Mammary epithelial cell (primary cell): ENCODE measurements at regions of chr3 and their contacts with region 1.

Region 1: GRCh38 chr3:194486540-194487288 is at the start of gene ATP13A3:
- DNase-seq: peak; percentile 85
- H3K4me3 ChIP-seq: peak within 1 kb of the TSS; percentile 62 to 76 (median 64)
- H3K27ac ChIP-seq: peak within 1 kb of the TSS; percentile 76
- H3K4me1 ChIP-seq: peaks cover 34% of the 10 kb centered on the region
- H3K27me3 ChIP-seq: no peaks in the 10 kb centered on the region
- CTCF ChIP-seq: no peak
- total RNA-seq, gene ATP13A3: 151 to 226 TPM

Region 2: DNA sequence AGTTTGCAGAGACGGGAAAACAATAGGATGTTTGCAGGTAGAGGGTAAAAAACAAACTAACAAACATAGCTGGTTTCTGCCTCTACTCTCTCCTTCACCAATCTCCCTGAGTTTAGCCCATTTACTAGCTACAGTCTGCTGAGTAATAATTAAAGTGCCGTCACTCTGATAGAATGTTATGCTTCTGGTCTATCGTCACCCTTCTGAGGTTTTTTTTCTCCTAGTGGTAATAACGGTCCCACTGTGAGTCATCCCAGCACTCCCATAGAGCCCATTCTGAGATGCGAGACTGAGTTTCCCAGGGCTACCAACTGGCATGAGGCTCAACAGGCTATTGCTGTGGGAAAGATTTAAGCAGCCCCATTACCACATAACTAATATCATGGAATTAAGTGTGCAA is 1189.3 kb before region 1 on chr3:
- CTCF ChIA-PET with region 1: no interaction called
- dilution Hi-C with region 1: no loop called
- in situ Hi-C with region 1: no loop called
- intact Hi-C with region 1: no loop called
- DNase-seq: no peak
- H3K4me3 ChIP-seq: no peak overlapping the region
- H3K27ac ChIP-seq: no peak overlapping the region
- H3K4me1 ChIP-seq: peaks cover 10% of the 10 kb centered on the region
- H3K27me3 ChIP-seq: no peaks in the 10 kb centered on the region
- CTCF ChIP-seq: no peak

Region 3: GRCh38 chr3:194404365-194405140 is 82.2 kb before region 1 on chr3:
- CTCF ChIA-PET with region 1: no interaction called
- dilution Hi-C with region 1: no loop called
- in situ Hi-C with region 1: no loop called
- intact Hi-C with region 1: no loop called
- DNase-seq: peak; percentile 29
- H3K4me3 ChIP-seq: no peak overlapping the region
- H3K27ac ChIP-seq: no peak overlapping the region
- H3K4me1 ChIP-seq: no peaks in the 10 kb centered on the region
- H3K27me3 ChIP-seq: no peaks in the 10 kb centered on the region
- CTCF ChIP-seq: peak; percentile 64 to 69

Region 4: GRCh38 chr3:194521514-194522260 is 35.0 kb after region 1 on chr3:
- CTCF ChIA-PET with region 1: no interaction called
- dilution Hi-C with region 1: no loop called
- in situ Hi-C with region 1: loop called in 1 of 2 experiments (anchors 5 kb)
- intact Hi-C with region 1: no loop called
- DNase-seq: peak; percentile 69
- H3K4me3 ChIP-seq: no peak overlapping the region
- H3K27ac ChIP-seq: peak overlapping the region; percentile 13
- H3K4me1 ChIP-seq: peaks cover 24% of the 10 kb centered on the region
- H3K27me3 ChIP-seq: no peaks in the 10 kb centered on the region
- CTCF ChIP-seq: no peak

Region 5: GRCh38 chr3:194527726-194528125 is 41.0 kb after region 1 on chr3:
- CTCF ChIA-PET with region 1: no interaction called
- dilution Hi-C with region 1: no loop called
- in situ Hi-C with region 1: loop called in 1 of 2 experiments (anchors 5 kb)
- intact Hi-C with region 1: loop called (anchors 1 kb)
- DNase-seq: no peak
- H3K4me3 ChIP-seq: no peak overlapping the region
- H3K27ac ChIP-seq: no peak overlapping the region
- H3K4me1 ChIP-seq: peaks cover 8% of the 10 kb centered on the region
- H3K27me3 ChIP-seq: no peaks in the 10 kb centered on the region
- CTCF ChIP-seq: no peak

Region 6: GRCh38 chr3:194537732-194538247 is 51.1 kb after region 1 on chr3:
- CTCF ChIA-PET with region 1: no interaction called
- dilution Hi-C with region 1: no loop called
- in situ Hi-C with region 1: no loop called
- intact Hi-C with region 1: no loop called
- DNase-seq: peak; percentile 24
- H3K4me3 ChIP-seq: no peak overlapping the region
- H3K27ac ChIP-seq: no peak overlapping the region
- H3K4me1 ChIP-seq: peaks cover 13% of the 10 kb centered on the region
- H3K27me3 ChIP-seq: no peaks in the 10 kb centered on the region
- CTCF ChIP-seq: no peak

Region 7: GRCh38 chr3:194573691-194574437 is 87.2 kb after region 1 on chr3:
- CTCF ChIA-PET with region 1: no interaction called
- dilution Hi-C with region 1: no loop called
- in situ Hi-C with region 1: no loop called
- intact Hi-C with region 1: loop called (anchors 1 kb)
- DNase-seq: no peak
- H3K4me3 ChIP-seq: no peak overlapping the region
- H3K27ac ChIP-seq: no peak overlapping the region
- H3K4me1 ChIP-seq: peaks cover 29% of the 10 kb centered on the region
- H3K27me3 ChIP-seq: no peaks in the 10 kb centered on the region
- CTCF ChIP-seq: peak; percentile 44 to 54

Region 8: DNA sequence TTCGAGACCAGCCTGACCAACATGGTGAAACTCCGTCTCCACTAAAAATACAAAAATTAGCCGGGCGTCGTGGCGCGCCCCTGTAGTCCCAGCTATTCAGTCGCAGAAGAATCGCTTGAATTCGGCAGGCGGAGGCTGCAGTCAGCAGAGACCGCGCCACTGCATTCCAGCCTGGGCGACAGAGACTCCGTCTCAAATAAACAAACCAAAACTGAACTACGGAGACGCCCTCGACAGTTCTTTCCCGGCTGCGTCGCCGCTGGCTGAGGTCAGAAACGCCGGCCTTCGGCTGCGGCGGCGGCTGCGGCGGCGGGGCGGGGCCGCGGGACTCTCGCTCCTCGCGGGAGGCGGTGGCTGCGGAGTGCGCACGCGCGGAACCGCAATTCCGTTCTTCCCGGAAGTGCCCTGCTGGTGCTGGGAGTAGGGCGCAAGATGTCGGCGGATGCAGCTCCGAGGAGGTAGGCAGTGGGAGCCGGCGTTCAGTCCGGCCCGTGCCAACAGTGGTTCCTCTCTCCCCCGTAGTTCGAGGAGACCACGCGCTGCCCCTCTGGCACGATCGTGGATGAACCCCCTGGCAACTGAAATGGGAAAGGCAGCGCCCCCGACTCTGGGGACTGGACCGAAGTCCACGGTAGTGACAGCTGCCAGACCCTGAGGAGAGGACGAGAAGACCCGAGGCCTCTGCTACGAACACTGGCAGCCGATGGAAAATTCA is 97.0 kb after region 1 on chr3:
- CTCF ChIA-PET with region 1: no interaction called
- dilution Hi-C with region 1: loop called (anchors 5 kb)
- in situ Hi-C with region 1: loop called in 1 of 2 experiments (anchors 5 kb)
- intact Hi-C with region 1: no loop called
- DNase-seq: peak; percentile 86
- H3K4me3 ChIP-seq: peak overlapping the region; percentile 85 to 88 (median 87)
- H3K27ac ChIP-seq: peak overlapping the region; percentile 82
- H3K4me1 ChIP-seq: peaks cover 5% of the 10 kb centered on the region
- H3K27me3 ChIP-seq: no peaks in the 10 kb centered on the region
- CTCF ChIP-seq: no peak

Region 9: DNA sequence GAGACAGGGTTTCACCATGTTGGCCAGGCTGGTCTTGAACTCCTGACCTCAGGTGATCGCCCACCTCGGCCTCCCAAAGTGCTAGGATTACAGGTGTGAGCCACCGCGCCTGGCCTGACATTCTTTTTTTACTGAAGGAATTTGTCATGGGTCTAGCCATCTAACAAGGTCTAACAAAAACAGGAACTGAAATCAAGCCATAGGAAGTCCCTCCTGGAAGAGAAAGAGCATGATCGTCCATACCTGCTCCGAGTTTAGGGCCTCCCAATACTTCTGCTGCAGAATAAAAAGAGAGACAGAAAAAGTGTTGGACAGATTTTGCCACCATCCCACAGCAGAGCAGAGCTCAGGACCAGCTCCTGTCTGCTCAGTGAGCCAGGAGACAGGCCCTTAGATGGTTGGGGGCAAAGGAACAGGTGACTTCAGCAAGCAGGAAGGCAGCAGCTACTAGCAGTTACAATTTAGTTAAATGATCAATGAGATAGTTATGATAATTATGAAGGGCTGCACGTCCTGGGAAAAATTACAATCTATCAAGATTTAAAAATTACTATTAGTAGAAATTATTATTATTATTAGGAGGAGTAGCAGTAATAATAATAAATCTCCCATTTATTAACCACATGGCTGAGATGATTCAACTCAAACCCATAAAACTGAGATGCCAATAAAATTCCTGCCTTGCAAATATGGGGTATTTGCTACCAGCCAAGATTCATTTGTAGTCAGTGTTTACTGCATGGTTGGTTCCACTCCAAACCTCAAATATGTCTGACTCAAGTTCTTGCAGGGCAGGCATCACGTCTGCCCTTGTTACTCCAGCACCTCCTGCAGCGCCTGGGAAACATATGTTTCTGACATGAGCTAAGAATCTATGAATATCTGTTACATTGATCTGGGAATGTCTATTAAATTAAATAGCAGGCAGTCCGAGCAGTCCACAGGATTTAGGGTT is 106.4 kb after region 1 on chr3:
- CTCF ChIA-PET with region 1: no interaction called
- dilution Hi-C with region 1: loop called (anchors 5 kb)
- in situ Hi-C with region 1: loop called (anchors 5 kb)
- intact Hi-C with region 1: loop called (anchors 1 kb)
- DNase-seq: peak; percentile 96
- H3K4me3 ChIP-seq: no peak overlapping the region
- H3K27ac ChIP-seq: no peak overlapping the region
- H3K4me1 ChIP-seq: peaks cover 13% of the 10 kb centered on the region
- H3K27me3 ChIP-seq: no peaks in the 10 kb centered on the region
- CTCF ChIP-seq: peak; percentile 18 to 47

Region 10: DNA sequence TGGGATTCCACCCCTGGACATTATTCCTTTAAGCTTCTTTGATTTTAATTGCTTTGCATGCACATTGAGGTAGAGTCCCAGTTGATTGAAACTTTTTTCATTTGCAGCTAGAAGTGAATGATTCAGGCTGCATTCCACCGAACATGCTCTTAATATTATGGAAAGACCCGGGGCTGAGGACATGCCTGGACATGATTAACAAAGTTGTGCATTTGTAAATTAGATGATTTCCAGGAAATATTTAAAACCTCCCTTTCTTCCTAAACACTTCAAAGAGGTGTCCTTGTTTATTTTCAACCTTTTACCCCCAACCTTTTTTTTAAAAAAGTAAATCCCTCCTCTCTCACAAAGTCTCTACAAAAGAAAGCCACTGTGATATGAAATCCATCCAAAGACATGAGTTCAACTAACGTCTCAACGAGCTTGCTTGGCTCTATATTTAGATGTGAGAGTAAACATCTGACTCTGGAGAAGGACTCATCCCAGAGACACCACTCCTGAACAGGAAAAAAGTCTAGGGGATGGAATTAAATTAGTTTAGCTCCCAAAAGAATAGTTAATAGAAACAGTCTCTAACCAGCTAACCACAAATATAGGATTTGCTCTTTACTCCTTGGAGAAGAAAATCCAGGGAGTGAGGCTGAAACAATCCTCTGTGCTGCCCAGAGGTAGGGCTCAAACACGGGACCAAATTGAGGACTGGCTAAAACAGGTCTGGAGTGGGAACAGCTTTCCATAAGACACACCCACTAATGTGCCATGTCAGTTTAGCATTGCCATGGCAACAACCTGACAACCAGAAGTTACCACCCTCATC is 701.1 kb after region 1 on chr3:
- CTCF ChIA-PET with region 1: no interaction called
- dilution Hi-C with region 1: no loop called
- in situ Hi-C with region 1: no loop called
- intact Hi-C with region 1: loop called (anchors 5 kb)
- DNase-seq: peak; percentile 77
- H3K4me3 ChIP-seq: peak overlapping the region in 1 of 3 experiments; percentile 15
- H3K27ac ChIP-seq: peak overlapping the region; percentile 90
- H3K4me1 ChIP-seq: peaks cover 32% of the 10 kb centered on the region
- H3K27me3 ChIP-seq: no peaks in the 10 kb centered on the region
- CTCF ChIP-seq: no peak